ENCODE measurements at regions of chr6 and their contacts with region 1.

Region 1: GRCh38 chr6:125790358-125791150 is at the start of gene NCOA7:
- H3K4me3 ChIP-seq: peak within 1 kb of the TSS; percentile 70
- H3K27ac ChIP-seq: peak within 1 kb of the TSS; percentile 91
- H3K4me1 ChIP-seq: peaks cover 31% of the 10 kb centered on the region
- CTCF ChIP-seq: peak; percentile 66; the same call in 1 of the 2 replicates

Region 2: DNA sequence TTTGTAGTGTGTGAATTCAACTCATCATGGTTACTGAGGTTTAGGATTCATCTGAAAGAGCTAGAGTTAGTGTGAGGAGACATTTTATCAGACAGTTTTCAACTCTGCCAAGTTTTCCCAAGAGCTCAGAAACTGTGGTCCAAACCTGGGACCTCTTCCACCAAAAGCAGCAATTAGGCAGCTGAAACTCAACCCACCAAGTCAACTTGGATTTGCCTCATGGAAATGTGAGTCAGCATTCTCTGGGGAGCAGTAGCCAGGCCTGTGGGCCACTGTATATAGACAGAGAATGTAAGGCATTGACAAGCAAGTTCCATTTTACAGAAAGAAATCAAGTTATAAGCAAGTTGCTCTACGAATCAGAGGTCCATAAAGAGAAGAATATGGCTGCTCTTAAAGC is 310.0 kb before region 1 on chr6:
- CTCF ChIA-PET with region 1: no interaction called
- POLR2A ChIA-PET with region 1: no interaction called
- H3K4me3 ChIP-seq: no peak overlapping the region
- H3K27ac ChIP-seq: no peak overlapping the region
- H3K4me1 ChIP-seq: no peaks in the 10 kb centered on the region
- CTCF ChIP-seq: no peak

Region 3: GRCh38 chr6:125700581-125701353 is 89.8 kb before region 1 on chr6:
- CTCF ChIA-PET with region 1: no interaction called
- POLR2A ChIA-PET with region 1: no interaction called
- H3K4me3 ChIP-seq: no peak overlapping the region
- H3K27ac ChIP-seq: no peak overlapping the region
- H3K4me1 ChIP-seq: no peaks in the 10 kb centered on the region
- CTCF ChIP-seq: no peak

Region 4: DNA sequence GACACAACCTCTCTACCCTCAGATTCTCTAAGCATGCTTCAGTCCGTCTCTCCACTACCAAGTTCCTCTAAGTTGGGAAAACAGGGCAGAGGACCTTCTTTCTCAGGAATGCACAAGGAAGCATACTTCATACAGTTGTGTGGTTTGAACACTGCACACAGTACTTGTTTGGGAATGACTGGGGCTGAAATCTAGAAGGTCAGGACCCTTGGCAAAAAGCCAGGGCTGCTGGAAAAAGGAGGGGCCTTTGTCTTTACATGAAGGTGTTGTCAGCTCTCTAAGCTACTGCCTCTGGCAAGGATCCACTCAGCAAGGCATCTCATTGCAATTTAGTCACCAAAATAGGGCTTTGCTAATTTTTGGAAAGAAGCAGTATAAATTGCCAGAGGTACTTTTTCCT is 61.8 kb before region 1 on chr6:
- CTCF ChIA-PET with region 1: no interaction called
- POLR2A ChIA-PET with region 1: no interaction called
- H3K4me3 ChIP-seq: no peak overlapping the region
- H3K27ac ChIP-seq: no peak overlapping the region
- H3K4me1 ChIP-seq: peaks cover 18% of the 10 kb centered on the region
- CTCF ChIP-seq: no peak

Region 5: DNA sequence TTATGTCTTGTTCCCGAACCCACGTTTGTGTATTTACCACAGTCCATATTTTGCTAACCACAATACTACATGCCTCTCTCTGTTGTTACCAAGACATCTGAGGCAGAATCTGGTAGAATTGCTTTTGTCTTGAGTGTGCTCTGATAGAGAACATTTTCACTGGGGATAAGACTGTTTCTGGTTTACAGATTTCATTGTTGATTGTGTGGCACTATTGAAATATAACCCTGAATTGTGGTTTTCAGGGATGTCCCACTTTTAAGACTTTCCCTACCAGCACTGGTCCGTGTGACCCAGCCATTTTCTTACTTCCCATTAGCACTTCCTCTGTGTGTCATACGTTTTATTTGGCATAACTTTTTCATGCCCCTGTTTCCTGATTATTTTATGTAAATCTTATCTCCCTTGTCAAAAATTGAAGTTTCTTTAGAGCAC is 12.4 kb after region 1 on chr6:
- CTCF ChIA-PET with region 1: interaction called, 22 read pairs
- POLR2A ChIA-PET with region 1: interaction called, 11 read pairs
- H3K4me3 ChIP-seq: no peak overlapping the region
- H3K27ac ChIP-seq: no peak overlapping the region
- H3K4me1 ChIP-seq: peaks cover 3% of the 10 kb centered on the region; the same call in 1 of the 2 replicates
- CTCF ChIP-seq: no peak

Region 6: GRCh38 chr6:125812394-125813292 is 22.1 kb after region 1 on chr6:
- CTCF ChIA-PET with region 1: interaction called, 21 read pairs
- POLR2A ChIA-PET with region 1: interaction called, 9 read pairs
- H3K4me3 ChIP-seq: peak overlapping the region; percentile 18
- H3K27ac ChIP-seq: peak overlapping the region; percentile 68
- H3K4me1 ChIP-seq: peaks cover 31% of the 10 kb centered on the region
- CTCF ChIP-seq: no peak

Region 7: DNA sequence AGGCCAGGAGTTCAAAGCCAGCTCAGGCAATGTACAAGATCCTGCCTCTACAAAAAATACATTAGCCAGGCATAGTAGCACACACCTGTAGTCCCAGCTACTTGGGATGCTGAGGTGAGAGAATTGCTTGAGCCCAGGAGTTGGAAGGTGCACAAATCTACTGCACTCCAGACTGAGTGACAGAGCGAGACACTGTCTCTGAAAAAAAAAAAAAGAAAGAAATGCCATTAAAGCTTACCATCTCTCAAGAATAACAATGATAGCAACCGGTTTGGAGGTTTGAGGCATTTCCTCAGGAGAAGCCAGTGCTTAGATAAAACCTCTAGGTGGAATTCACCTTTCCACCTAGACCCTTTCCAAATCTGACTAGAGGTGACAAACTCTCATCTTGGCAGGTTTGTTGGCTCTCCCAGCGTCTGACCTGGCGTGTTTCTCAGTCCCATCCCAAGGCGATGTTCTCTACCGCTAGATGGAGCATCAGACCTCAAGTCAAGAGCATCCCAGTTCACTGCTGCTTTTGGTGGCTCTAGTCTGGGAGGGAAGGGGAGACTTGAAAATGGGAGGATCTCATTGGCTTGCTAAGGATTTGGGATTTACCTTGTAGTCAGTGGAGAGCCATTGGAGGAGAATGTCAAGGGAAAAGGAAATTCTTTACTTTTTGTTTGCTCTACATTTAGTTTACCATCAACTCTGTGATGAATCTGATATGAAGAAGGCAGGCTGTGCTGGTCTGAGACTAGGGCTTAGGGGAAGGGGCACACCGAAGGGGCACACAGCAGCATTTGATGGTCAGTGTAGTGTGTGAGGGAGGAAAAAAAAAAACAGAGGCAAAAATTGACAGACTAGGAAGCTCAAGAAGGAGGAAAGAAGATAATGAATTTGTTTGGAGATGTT is 68.1 kb after region 1 on chr6:
- CTCF ChIA-PET with region 1: interaction called, 29 read pairs
- POLR2A ChIA-PET with region 1: interaction called, 5 read pairs
- H3K4me3 ChIP-seq: no peak overlapping the region
- H3K27ac ChIP-seq: no peak overlapping the region
- H3K4me1 ChIP-seq: peaks cover 2% of the 10 kb centered on the region; the same call in 1 of the 2 replicates
- CTCF ChIP-seq: peak; percentile 68

Region 8: DNA sequence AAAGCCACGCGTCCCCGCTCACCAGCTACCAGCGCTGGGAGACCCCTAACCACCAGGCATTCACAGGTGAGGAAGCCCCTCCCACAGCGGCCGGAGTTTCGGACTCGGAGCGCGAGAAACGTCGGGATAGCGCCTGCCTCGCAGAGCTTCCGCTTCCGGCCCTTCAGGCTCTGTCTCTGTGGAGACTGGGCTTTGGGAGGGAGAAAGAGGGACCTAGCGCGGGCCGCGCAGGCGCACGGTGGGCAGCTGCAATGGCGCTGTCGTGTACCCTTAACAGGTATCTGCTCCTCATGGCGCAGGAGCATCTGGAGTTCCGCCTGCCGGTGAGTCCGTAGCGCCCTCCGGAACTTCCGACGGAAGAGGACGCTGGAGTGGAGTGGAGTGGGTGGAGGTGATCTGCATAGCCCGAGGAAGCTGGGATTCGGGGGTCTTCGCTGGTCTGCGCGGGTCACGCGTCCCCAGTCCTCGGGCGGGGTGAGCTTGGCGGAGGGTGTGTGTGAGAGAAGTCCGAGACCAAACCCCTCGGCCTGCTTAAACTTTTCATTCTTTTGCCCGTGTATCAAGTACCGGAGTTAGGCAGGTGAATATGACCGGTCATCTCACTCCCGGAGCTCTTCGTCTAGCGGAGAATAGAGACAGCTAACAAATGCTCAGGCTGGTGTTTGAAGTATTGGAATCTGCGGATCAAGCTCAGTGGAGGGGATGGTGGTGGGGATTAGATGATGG is 195.9 kb after region 1 on chr6 and contains the start of gene TRMT11:
- CTCF ChIA-PET with region 1: interaction called, 3 read pairs
- POLR2A ChIA-PET with region 1: interaction called, 27 read pairs
- H3K4me3 ChIP-seq: peak within 1 kb of the TSS; percentile 81
- H3K27ac ChIP-seq: peak within 1 kb of the TSS; percentile 63
- H3K4me1 ChIP-seq: peaks cover 5% of the 10 kb centered on the region
- CTCF ChIP-seq: peak; percentile 89

Measured in HEK293 (cell line).